ENCODE measurements at regions of chr6 and their contacts with region 1.

Region 1: DNA sequence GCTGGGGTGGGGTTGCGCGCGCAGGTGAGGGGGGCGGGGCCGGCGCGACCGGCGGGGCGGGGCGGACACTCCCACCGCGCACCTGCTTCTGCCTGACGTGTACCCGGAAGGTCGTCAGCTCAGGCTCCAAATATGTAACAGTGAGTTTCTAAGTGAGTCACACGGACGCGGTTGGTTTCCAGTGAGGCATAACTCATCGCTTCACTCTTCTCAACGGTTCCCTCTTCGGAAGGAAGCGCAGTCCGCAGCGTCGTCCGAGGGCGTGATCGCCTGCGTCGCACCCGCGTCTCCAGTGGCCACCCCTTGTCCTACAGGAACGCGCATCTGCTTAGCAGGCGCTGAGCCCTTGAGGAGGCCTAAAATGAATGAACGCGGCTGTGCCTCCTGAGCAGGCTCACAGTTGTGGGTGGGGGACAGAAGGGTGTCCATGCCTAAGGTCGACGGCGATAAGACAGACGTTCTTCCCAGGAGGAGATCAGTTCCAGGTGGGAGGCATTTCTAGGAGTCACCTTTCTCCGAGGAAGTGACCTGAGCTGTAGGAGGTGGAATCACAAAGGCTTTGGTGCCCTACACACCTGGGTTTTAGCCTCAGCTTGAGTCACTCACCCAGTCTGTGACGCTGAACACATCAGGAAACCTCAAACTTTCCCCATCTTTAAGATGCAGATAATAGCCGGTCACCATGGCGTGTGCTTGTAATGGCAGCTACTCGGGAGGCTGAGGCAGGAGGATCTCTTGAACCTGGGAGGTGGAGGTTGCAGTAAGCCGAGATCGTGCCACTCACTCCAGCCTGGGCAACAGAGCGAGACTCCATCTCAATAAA is 50.9 kb upstream of the EZR start:
- DNase-seq: peak; percentile 96 to 97
- ATAC-seq: peak; percentile 91 to 97
- H3K4me3 ChIP-seq: peak overlapping the region; percentile 43
- H3K27ac ChIP-seq: peak overlapping the region; percentile 94 to 98
- H3K4me1 ChIP-seq: peaks cover 43% of the 10 kb centered on the region
- CTCF ChIP-seq: no peak
- EP300 ChIP-seq: no peak
- POLR2A ChIP-seq: peak; percentile 60
- RAD21 ChIP-seq: peak; percentile 40 to 42; a peak in 4 of 5 replicates

Region 2: DNA sequence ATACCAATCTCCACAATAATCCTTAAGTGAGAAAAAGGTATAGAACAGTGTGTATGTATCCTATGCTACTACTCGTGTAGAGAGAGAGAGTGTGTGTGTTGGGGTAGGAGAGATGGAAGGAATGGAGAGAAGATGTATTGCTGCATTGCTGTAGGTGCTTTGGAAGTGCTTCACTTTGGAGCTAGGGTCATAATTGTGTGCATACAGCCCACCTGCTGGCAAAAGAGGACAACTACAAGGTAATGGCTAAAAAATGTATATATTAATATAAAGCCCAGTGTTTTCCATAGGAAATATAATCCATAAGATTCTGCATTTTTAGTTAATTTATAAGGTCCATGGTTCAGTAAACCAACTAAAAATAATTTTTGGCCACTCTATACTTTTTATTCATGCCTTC is 738.1 kb before region 1 on chr6:
- CTCF ChIA-PET with region 1: no interaction called
- POLR2A ChIA-PET with region 1: no interaction called
- DNase-seq: peak; percentile 18 to 50
- ATAC-seq: peak; percentile 83 to 87
- H3K4me3 ChIP-seq: no peak overlapping the region
- H3K27ac ChIP-seq: no peak overlapping the region
- H3K4me1 ChIP-seq: no peaks in the 10 kb centered on the region
- CTCF ChIP-seq: peak; percentile 42
- EP300 ChIP-seq: no peak
- POLR2A ChIP-seq: no peak
- RAD21 ChIP-seq: peak; percentile 56 to 77

Region 3: DNA sequence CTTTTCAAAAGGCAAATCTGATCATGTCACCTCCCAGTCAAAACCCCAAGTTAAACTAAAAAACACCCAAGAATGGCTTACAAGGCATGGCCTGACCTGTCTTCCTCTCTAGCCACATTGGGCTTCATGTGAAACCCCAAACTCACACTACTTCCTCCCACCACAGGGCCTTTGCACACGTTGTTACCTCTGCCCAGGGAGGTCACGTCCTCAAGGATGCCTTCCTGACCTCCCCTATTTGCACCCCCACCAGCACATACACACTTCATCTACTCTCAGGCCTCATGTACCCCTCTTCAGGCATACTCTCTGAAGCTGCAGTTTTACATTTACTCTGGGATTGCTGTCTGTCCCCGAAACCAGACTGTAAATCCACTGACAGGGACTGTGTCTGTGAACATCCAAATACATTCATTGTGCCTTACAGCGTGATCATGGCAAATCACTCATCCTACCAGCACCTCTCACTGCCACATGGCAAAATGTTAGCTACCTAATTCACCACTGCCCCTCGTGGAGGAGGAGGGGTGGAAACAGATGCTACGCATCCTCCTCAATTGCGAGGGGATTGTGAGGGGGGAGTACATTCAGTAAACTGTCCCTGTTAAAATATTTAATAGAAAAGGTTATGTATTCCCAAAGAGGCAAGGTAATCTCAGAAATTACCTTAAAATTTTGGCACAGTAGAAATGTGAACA is 56.9 kb before region 1 on chr6:
- CTCF ChIA-PET with region 1: interaction called, 4 read pairs
- POLR2A ChIA-PET with region 1: interaction called, 23 read pairs
- DNase-seq: no peak
- ATAC-seq: no peak
- H3K4me3 ChIP-seq: peak overlapping the region; percentile 17; the same call in 1 of the 3 replicates
- H3K27ac ChIP-seq: peak overlapping the region in 1 of 2 experiments; percentile 40; a peak in 1 of 6 replicates
- H3K4me1 ChIP-seq: peaks cover 79% of the 10 kb centered on the region
- CTCF ChIP-seq: no peak
- EP300 ChIP-seq: no peak
- POLR2A ChIP-seq: no peak
- RAD21 ChIP-seq: no peak

Region 4: GRCh38 chr6:158819213-158819909 is 50.7 kb before region 1 on chr6 and contains the start of gene EZR:
- CTCF ChIA-PET with region 1: interaction called, 4 read pairs
- POLR2A ChIA-PET with region 1: interaction called, 36 read pairs
- DNase-seq: peak; percentile 77 to 86
- ATAC-seq: peak; percentile 71 to 82
- H3K4me3 ChIP-seq: peak within 1 kb of the TSS; percentile 90
- H3K27ac ChIP-seq: peak within 1 kb of the TSS; percentile 98 to 99
- H3K4me1 ChIP-seq: peaks cover 17% of the 10 kb centered on the region
- CTCF ChIP-seq: no peak
- EP300 ChIP-seq: no peak
- POLR2A ChIP-seq: peak; percentile 80
- RAD21 ChIP-seq: peak in 1 of 2 experiments; percentile 25; a peak in 1 of 5 replicates
- polyA plus RNA-seq, gene EZR: 207 and 254 TPM in 2 replicates

Region 5: GRCh38 chr6:158853072-158853871 is 16.8 kb before region 1 on chr6:
- CTCF ChIA-PET with region 1: interaction called, 11 read pairs
- POLR2A ChIA-PET with region 1: interaction called, 42 read pairs
- DNase-seq: peak; percentile 83 to 97
- ATAC-seq: peak; percentile 76 to 78
- H3K4me3 ChIP-seq: peak overlapping the region; percentile 23; the same call in 2 of the 3 replicates
- H3K27ac ChIP-seq: peak overlapping the region; percentile 92 to 97
- H3K4me1 ChIP-seq: peaks cover 87% of the 10 kb centered on the region
- CTCF ChIP-seq: no peak
- EP300 ChIP-seq: peak; percentile 40 to 81; a peak in 3 of 5 replicates
- POLR2A ChIP-seq: no peak
- RAD21 ChIP-seq: peak in 1 of 2 experiments; percentile 9; a peak in 1 of 5 replicates

Region 6: DNA sequence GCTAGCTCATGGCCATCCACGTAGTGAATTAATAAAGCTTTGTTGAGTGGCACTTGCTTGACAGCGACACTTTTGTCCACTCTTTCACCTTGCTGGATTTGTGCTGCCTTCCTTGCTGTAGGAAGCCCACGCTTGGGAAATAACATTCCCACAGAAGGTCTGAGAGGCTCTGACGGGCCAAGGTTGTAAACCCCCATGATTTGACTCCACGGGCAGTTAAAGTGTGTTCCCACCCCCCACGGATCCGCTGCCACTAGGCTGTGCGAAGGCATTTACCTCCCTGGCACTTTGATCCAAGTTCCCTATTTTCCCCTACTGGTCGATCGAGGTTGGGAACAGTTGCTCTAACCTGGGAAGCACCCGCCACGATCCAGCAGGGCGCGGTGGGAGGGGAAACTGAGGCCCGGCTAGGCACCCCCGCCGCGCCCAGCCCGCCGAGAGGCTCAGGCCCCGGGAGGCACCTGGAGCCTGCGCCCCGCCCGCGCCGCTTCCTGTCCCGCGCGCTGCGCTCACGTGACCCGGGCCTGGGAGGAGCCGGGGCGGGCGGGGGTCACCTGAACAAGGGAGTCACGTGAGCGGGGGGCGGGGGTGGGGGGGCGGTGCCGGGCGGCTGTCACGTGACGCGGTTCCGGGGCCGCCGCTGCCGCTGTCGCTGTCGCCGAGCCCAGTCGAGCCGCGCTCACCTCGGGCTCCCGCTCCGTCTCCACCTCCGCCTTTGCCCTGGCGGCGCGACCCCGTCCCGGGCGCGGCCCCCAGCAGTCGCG is 1098.6 kb after region 1 on chr6 and contains the start of gene IGF2R:
- CTCF ChIA-PET with region 1: no interaction called
- POLR2A ChIA-PET with region 1: no interaction called
- DNase-seq: peak; percentile 83 to 86
- ATAC-seq: peak; percentile 82 to 92
- H3K4me3 ChIP-seq: peak within 1 kb of the TSS; percentile 71
- H3K27ac ChIP-seq: peak within 1 kb of the TSS; percentile 91 to 98
- H3K4me1 ChIP-seq: peaks cover 13% of the 10 kb centered on the region; the same call in 1 of the 3 replicates
- CTCF ChIP-seq: no peak
- EP300 ChIP-seq: peak in 1 of 2 experiments; percentile 38; a peak in 1 of 5 replicates
- POLR2A ChIP-seq: peak; percentile 74
- RAD21 ChIP-seq: no peak
- polyA plus RNA-seq, gene IGF2R: 17.6 and 25.6 TPM in 2 replicates

Measured in A549 (cell line).